Ascending aorta (tissue), 2 donors: ENCODE measurements at regions of chr2 and their contacts with region 1.

Region 1: DNA sequence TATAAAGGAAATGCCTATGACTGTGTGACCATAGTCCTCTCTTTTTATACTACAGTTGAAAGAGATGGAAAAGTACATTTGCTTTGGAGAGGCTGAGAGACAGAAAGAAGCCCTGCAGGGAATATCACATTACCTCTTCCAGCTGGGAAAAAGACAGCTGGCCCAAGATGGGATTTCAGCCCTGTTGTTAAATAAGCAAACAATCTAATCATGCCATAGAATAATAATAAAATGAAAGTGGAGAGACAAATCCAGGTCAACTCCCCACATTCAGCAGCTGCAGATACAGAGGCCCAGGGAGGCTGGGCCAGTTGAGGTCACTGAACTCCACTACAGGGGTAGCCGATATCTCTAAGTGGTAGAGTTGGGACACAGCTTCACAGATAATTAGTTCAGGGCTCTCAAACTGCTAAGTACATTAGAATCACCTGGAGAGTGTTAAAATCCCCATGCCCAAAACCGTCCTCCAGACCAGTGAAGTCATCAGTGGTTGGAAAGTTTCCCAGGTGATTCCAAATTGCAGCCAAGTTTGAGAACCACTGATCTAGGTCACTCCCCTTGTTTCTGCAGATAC is 81.9 kb downstream of the MOGAT1 start:
- DNase-seq: no peak
- H3K4me3 ChIP-seq: peak overlapping the region in 1 of 2 donors; percentile 35
- H3K27ac ChIP-seq: peak overlapping the region; percentile 71 to 80
- H3K4me1 ChIP-seq: peaks cover 6 to 17% of the 10 kb centered on the region in 2 donors
- H3K27me3 ChIP-seq: no peaks in the 10 kb centered on the region
- CTCF ChIP-seq: no peak

Region 2: DNA sequence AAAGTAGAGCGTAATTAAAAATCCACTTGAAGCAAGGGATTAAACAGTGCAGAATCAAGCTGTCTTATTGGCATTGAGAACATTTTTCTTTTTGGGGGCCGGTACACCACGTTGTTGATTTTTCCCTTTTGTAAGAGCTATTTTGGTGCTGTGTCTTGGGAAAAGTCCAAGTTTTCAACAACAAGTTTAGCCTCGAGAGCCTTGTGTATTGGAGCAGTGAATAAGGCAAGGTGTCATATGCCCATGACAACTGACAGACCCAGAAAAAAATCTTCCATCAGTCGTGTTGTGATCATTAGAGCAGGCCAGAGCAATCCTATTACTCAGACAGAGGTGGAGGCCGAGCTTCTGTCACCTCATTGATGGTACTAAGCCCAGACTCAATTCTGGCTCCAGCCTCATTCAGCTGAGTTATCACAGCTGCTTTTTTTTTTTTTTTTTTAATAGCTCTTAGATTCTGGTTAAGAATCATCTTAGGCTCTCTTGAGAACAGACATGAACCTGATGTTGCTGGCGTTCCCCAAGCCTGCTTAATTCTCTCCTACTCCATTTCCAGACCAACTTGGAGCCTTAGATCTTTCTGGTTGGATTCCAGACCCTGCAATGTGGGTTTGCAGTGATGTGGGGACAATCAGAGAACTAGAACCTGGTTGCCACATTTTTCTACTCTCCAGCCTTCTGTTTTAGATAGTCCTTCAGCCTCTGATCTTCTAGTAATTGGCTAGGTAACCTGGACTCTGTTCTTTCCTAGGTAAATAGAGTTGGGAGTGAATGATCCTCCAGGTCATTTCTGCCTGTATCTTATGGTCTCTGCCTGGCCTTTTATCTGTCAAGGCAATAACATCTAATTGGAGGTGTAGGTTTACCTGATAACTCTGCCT is 38.7 kb before region 1 on chr2:
- intact Hi-C with region 1: loop called (anchors 2 kb)
- DNase-seq: peak; percentile 24 to 77
- H3K4me3 ChIP-seq: peak overlapping the region in 1 of 2 donors; percentile 16
- H3K27ac ChIP-seq: peak overlapping the region; percentile 78 to 91
- H3K4me1 ChIP-seq: peaks cover 3 to 29% of the 10 kb centered on the region in 2 donors
- H3K27me3 ChIP-seq: no peaks in the 10 kb centered on the region
- CTCF ChIP-seq: no peak

Region 3: DNA sequence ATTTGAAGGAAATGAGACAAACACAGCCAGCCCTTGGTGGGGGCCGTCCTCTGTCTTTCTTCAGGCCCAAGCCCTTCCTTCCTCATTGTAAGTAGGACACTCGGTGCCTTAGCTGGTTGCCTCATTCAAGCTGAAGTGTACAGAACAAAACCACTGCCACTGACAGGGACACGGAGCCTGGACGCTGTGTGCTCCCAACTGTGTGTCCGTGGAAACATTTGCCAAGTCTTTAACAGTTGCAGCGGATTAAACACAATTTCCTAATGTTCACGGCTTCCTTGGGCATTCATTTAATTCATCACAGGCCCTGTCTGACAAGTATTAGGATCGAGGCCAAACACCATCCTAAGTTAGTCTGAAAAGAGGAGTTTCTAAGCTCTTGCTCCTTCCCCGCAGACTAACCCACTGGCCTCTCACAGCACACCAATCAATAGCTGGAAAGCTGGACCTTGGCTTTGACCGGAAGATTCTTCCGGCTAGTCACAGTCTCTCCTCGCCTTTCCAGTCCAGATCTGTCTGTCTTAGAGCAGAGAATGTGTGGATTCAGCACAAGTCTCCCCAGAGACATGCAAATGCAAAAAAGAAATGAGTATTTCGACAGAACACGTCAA is 38.8 kb after region 1 on chr2:
- intact Hi-C with region 1: loop called (anchors 5 kb)
- DNase-seq: peak; percentile 42 to 84
- H3K4me3 ChIP-seq: no peak overlapping the region
- H3K27ac ChIP-seq: peak overlapping the region; percentile 72 to 85
- H3K4me1 ChIP-seq: peaks cover 0 to 23% of the 10 kb centered on the region in 2 donors
- H3K27me3 ChIP-seq: no peaks in the 10 kb centered on the region
- CTCF ChIP-seq: no peak

Region 4: DNA sequence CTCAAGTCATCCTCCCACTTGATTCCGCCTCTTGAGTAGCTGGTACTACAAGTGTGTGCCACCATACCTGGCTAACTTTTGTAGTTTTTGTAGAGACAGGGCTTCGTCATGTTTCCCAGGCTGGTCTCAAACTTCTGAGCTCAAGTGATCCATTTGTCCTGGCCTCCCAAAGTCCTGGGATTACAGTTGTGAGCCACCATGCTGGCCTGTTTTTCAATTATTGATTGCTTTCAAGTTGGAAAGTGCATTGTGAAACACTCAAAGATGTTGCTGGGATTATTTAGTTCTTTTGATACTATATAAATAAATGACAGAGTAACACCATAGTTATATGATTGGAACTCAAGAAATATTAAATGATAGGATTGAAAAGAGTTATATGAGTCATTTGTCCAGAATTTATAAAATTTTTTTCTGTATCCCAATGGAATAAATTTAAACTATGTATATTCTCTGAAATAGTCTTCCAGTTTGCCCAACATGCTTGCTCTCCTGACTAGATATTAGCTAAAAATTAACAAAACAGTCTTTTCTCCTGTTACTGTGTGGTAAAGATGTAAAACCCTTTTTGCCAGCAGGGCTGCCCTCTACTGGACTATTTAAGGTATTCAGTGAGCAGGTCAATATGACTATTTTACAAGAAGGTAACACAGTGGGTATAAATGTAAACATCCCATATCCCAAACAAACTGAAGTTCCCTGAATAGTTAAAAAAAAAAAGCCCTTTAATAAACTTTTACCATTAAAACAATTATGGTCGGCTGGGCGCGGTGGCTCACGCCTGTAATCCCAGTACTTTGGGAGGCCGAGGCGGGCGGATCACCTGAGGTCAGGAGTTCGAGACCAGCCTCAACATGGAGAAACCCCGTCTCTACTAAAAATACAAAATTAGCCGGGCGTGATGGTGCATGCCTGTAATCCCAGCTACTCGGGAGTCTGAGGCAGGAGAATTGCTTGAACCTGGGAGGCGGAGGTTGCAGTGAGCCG is 150.2 kb after region 1 on chr2:
- intact Hi-C with region 1: loop called (anchors 5 kb)
- DNase-seq: no peak
- H3K4me3 ChIP-seq: no peak overlapping the region
- H3K27ac ChIP-seq: peak overlapping the region in 1 of 2 donors; percentile 61
- H3K4me1 ChIP-seq: peaks cover 3 to 29% of the 10 kb centered on the region in 2 donors
- H3K27me3 ChIP-seq: no peaks in the 10 kb centered on the region
- CTCF ChIP-seq: peak; percentile 42 to 57 (median 44)

Region 5: GRCh38 chr2:223854741-223855140 is 1101.4 kb after region 1 on chr2:
- intact Hi-C with region 1: no loop called
- DNase-seq: no peak
- H3K4me3 ChIP-seq: no peak overlapping the region
- H3K27ac ChIP-seq: no peak overlapping the region
- H3K4me1 ChIP-seq: no peaks in the 10 kb centered on the region
- H3K27me3 ChIP-seq: no peaks in the 10 kb centered on the region
- CTCF ChIP-seq: no peak